WTC11 (cell line): ENCODE measurements at regions of chr19 and their contacts with region 1.

Region 1: GRCh38 chr19:48993175-48994034 is at the starts of genes GYS1 and RUVBL2:
- DNase-seq: peak; percentile 100
- ATAC-seq: peak; percentile 93
- H3K4me3 Mint-ChIP-seq: peak within 1 kb of the TSS; percentile 99
- H3K27ac Mint-ChIP-seq: peak within 1 kb of the TSS; percentile 97
- H3K4me1 Mint-ChIP-seq: peaks cover 31% of the 10 kb centered on the region
- H3K27me3 Mint-ChIP-seq: no peaks in the 10 kb centered on the region
- CTCF ChIP-seq: peak; percentile 85
- total RNA-seq, gene GYS1: 45.9 to 52.0 TPM (median 46.1 TPM) in 3 replicates
- total RNA-seq, gene RUVBL2: 168 to 178 TPM (median 169 TPM) in 3 replicates

Region 2: GRCh38 chr19:48795055-48795684 is 198.2 kb before region 1 on chr19:
- CTCF ChIA-PET with region 1: interaction called, 12 read pairs
- POLR2A ChIA-PET with region 1: no interaction called
- DNase-seq: peak; percentile 94
- ATAC-seq: peak; percentile 96
- H3K4me3 Mint-ChIP-seq: peak overlapping the region; percentile 96
- H3K27ac Mint-ChIP-seq: peak overlapping the region; percentile 98
- H3K4me1 Mint-ChIP-seq: peaks cover 18% of the 10 kb centered on the region
- H3K27me3 Mint-ChIP-seq: no peaks in the 10 kb centered on the region; the same call in none of the 2 replicates
- CTCF ChIP-seq: peak; percentile 92

Region 3: GRCh38 chr19:48918801-48919247 is 74.6 kb before region 1 on chr19:
- CTCF ChIA-PET with region 1: interaction called, 15 read pairs
- POLR2A ChIA-PET with region 1: no interaction called
- DNase-seq: peak; percentile 81
- ATAC-seq: peak; percentile 97
- H3K4me3 Mint-ChIP-seq: no peak overlapping the region
- H3K27ac Mint-ChIP-seq: 0 out of 2 replicates have a peak overlapping the region, but pooled peaks have one; percentile 76
- H3K4me1 Mint-ChIP-seq: no peaks in the 10 kb centered on the region
- H3K27me3 Mint-ChIP-seq: no peaks in the 10 kb centered on the region
- CTCF ChIP-seq: no peak

Region 4: DNA sequence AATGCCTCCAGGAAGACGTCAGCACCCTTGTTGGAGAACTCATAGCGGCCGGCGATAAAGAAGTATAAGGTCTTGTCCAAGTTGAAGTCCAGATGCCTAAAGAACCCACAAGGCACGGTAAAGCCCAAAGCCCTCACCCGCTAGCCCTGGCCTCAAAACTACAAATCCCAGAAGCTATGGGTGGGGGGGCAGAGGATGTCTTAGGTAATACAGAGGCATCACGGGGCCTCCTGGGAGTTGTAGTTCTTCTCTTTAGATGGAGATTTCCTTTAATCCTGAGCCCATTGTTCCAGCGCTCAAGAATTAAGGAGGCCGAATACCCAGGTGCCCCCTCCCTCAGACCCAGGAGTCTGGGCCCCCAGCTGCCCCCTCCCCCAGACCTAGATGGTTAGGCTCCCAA is 11.1 kb before region 1 on chr19:
- CTCF ChIA-PET with region 1: interaction called, 49 read pairs
- POLR2A ChIA-PET with region 1: interaction called, 4 read pairs
- DNase-seq: no peak
- ATAC-seq: peak; percentile 49
- H3K4me3 Mint-ChIP-seq: no peak overlapping the region
- H3K27ac Mint-ChIP-seq: no peak overlapping the region
- H3K4me1 Mint-ChIP-seq: no peaks in the 10 kb centered on the region
- H3K27me3 Mint-ChIP-seq: no peaks in the 10 kb centered on the region
- CTCF ChIP-seq: no peak

Region 5: DNA sequence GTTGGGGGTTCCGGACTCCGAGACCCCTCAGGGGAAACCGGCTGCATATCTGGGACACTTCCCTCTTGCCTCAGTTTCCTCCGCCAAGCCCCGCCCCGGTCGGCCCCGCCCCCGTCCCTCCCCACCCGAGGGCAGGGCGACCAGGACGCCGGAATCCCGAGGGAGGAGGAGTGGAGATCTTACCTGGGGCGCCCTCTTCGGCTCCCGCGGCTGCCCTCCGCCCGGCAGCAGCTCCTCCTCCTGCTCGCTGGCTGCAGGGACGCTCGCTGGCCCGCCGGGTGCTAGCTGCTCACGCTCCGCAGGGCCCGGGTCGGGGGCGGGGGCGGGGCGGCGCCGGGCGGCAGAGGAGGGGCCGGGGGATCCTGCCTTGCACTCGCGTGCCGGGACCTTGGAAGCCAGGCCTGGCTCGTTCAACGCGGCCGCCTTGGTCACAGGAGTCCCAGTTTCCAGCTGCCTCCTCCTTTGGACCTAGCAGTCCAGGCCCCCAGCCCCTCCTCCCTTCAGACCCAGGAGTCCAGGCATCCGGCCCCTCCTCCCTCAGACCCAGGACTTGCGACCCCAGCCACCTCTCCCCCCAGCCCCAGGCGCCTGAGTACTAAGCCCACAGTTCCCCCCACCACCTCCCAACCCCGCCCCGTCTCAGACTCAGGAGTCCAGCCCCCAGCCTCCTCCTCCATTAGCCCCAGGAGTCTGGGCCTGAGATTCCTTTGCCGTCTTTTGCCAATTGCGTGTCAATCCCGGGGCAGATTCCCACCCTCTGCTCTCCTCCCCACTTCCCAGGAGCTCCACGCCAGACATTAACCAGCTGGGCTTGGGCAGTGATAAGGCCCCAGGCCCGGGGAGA is 71.6 kb after region 1 on chr19 and contains the start of gene NTF4:
- CTCF ChIA-PET with region 1: interaction called, 26 read pairs
- POLR2A ChIA-PET with region 1: no interaction called
- DNase-seq: peak; percentile 78
- ATAC-seq: peak; percentile 73
- H3K4me3 Mint-ChIP-seq: peak within 1 kb of the TSS; percentile 66
- H3K27ac Mint-ChIP-seq: no peak within 1 kb of the TSS
- H3K4me1 Mint-ChIP-seq: peaks cover 33% of the 10 kb centered on the region
- H3K27me3 Mint-ChIP-seq: peaks cover 79% of the 10 kb centered on the region
- CTCF ChIP-seq: no peak
- total RNA-seq, gene NTF4: 3.9 to 7.7 TPM (median 5.0 TPM) in 3 replicates

Region 6: GRCh38 chr19:49133621-49134454 is 140.4 kb after region 1 on chr19:
- CTCF ChIA-PET with region 1: interaction called, 10 read pairs
- POLR2A ChIA-PET with region 1: no interaction called
- DNase-seq: peak; percentile 90
- ATAC-seq: peak; percentile 80
- H3K4me3 Mint-ChIP-seq: peak overlapping the region; percentile 70
- H3K27ac Mint-ChIP-seq: peak overlapping the region; percentile 79; the same call in 1 of the 2 replicates
- H3K4me1 Mint-ChIP-seq: peaks cover 33% of the 10 kb centered on the region
- H3K27me3 Mint-ChIP-seq: peaks cover 51% of the 10 kb centered on the region
- CTCF ChIP-seq: no peak